ENCODE measurements at regions of chr10 and their contacts with region 1.

Region 1: GRCh38 chr10:29658984-29659965 is 24.5 kb upstream of the SVIL start:
- DNase-seq: peak; percentile 76
- ATAC-seq: peak; percentile 99
- H3K4me3 Mint-ChIP-seq: peak overlapping the region; percentile 32
- H3K27ac Mint-ChIP-seq: peak overlapping the region; percentile 6
- H3K4me1 Mint-ChIP-seq: peaks cover 40% of the 10 kb centered on the region
- H3K27me3 Mint-ChIP-seq: peaks cover 4% of the 10 kb centered on the region

Region 2: DNA sequence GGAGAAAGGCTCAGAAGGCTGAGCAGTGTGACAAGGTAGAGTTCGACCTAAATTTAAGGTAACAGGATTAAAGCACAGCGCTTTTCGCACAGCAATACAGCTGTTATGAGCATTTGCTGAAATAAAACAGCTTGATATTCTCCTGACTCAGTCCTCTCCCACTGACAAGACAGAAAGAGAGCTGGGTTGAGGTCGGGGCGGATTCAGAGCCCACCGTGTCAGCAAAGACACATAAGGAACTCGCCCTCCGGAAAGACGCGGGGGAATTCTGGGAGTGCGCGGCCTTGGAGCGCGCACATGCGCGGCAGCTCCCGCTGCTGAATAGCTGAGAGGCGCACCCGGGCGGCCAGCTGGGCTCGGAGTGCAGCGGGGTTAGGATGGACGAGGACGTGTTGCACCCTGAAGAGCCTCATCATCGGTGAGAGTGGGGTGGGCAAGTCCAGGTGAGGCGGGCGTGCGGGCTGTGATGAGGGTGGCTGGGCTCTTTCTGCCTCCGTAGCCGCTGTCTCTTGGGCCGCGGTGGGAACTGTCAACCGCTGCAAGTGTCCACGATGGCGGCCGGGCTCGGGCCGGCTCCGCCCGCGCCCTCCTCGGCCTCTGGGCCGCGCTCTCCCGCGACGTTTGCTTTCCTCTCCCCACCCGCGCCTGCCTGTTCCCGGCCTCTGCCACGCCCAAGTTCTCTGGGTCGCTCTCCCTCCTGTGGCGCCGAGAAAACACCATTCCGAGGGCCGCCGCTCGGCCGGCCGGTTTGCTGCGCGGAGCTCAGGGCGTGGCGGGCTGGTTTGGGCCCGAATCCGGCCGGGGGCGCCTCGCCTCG is 249.8 kb before region 1 on chr10:
- CTCF ChIA-PET with region 1: no interaction called
- POLR2A ChIA-PET with region 1: no interaction called
- intact Hi-C with region 1: loop called in 1 of 2 experiments (anchors 5 kb)
- DNase-seq: peak; percentile 64
- ATAC-seq: peak; percentile 63
- H3K4me3 Mint-ChIP-seq: peak overlapping the region; percentile 96
- H3K27ac Mint-ChIP-seq: peak overlapping the region; percentile 92
- H3K4me1 Mint-ChIP-seq: peaks cover 33% of the 10 kb centered on the region
- H3K27me3 Mint-ChIP-seq: no peaks in the 10 kb centered on the region

Region 3: DNA sequence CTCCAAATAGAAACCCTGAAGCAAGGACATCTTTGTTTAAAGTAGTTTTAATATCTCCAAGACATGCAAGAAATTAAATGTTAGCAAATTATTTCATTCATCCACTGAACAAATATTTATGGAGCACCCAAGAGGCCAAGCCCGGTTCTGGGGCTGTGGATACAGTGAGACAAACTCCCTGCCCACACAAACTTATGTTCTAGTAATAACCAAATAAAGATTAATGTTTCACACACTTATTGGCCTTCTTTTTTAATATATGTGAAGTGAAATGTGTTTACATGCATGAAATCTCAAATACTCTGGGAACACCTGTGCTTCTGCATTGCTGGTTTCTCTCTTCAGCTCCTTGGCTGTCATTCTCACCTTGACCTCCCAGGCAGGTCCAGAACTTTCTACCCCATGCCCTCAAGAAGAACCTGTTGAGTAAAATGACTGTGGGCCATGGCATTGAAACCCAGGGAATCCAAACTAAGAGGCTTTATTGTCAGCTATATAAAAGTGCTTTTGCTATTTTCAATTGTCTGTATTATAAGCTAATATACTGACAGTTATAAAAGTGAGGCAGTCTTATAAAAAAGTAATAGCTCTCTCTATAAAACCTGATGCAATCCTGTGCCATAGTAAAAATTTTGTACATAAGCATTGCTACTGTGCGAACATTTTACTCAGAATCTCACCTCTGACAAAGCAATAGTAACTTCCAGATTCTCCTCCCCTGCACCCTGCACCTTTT is 68.2 kb before region 1 on chr10:
- CTCF ChIA-PET with region 1: no interaction called
- POLR2A ChIA-PET with region 1: no interaction called
- intact Hi-C with region 1: loop called (anchors 1 kb)
- DNase-seq: no peak
- ATAC-seq: no peak
- H3K4me3 Mint-ChIP-seq: peak overlapping the region; percentile 44
- H3K27ac Mint-ChIP-seq: peak overlapping the region; percentile 86
- H3K4me1 Mint-ChIP-seq: peaks cover 18% of the 10 kb centered on the region
- H3K27me3 Mint-ChIP-seq: no peaks in the 10 kb centered on the region

Region 4: GRCh38 chr10:29635711-29636144 is 23.5 kb before region 1 on chr10:
- CTCF ChIA-PET with region 1: no interaction called
- POLR2A ChIA-PET with region 1: no interaction called
- intact Hi-C with region 1: loop called (anchors 1 kb)
- DNase-seq: peak; percentile 22
- ATAC-seq: no peak
- H3K4me3 Mint-ChIP-seq: no peak overlapping the region
- H3K27ac Mint-ChIP-seq: no peak overlapping the region
- H3K4me1 Mint-ChIP-seq: peaks cover 46% of the 10 kb centered on the region
- H3K27me3 Mint-ChIP-seq: no peaks in the 10 kb centered on the region

Region 5: DNA sequence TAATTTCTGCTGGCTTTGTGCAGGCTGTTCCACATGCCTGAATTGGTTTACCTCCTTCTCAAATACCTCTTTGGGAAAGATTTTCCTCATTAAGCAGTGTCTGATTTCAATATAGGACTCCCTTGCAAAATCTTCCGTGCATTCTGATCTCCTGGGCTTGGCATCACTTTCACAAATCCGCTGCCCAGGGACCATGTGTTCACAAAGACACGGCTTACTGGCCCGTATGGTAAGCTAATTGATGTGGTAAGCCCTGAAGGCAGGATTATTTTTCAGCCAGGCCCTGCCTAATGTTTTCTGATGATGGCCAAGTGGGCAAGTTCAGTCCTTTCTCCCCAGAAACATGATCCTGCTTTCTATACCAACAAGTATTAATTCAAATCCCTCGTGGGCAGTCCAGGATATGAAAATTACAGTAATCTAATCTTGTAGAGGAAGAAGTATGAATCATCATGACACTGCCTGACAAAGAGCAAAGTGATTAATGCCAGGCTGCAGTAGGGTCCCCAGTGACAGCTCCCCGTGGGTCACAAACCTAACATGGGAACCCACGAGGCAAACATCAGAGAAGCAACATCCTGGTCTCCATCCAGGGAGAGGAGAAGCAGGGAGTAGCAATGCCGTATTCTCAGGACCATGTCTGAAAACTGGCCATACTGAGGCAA is 12.9 kb before region 1 on chr10:
- CTCF ChIA-PET with region 1: interaction called, 9 read pairs
- POLR2A ChIA-PET with region 1: interaction called, 3 read pairs
- intact Hi-C with region 1: loop called (anchors 1 kb)
- DNase-seq: peak; percentile 41
- ATAC-seq: peak; percentile 87
- H3K4me3 Mint-ChIP-seq: no peak overlapping the region
- H3K27ac Mint-ChIP-seq: peak overlapping the region; percentile 9
- H3K4me1 Mint-ChIP-seq: peaks cover 46% of the 10 kb centered on the region
- H3K27me3 Mint-ChIP-seq: no peaks in the 10 kb centered on the region

Region 6: DNA sequence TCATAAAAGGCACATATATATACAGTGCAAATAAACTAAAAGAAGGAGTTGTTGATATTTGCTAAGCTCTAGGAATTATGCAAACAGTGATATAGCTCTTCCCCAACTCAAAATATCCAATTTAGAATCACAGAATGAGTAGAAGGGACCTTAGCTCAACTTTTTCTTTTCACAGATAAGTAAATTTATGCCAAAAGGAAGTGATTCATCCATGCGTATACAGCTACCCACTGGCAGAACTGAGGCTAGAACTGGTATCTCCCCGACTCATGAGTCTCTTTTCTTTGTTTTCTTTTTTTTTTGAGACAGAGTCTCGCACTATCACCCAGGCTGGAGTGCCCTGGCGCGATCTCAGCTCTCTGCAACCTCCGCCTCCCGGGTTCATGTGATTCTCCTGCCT is 29.7 kb after region 1 on chr10:
- CTCF ChIA-PET with region 1: interaction called, 6 read pairs
- POLR2A ChIA-PET with region 1: interaction called, 8 read pairs
- intact Hi-C with region 1: loop called (anchors 1 kb)
- DNase-seq: peak; percentile 50
- ATAC-seq: peak; percentile 98
- H3K4me3 Mint-ChIP-seq: no peak overlapping the region
- H3K27ac Mint-ChIP-seq: no peak overlapping the region
- H3K4me1 Mint-ChIP-seq: peaks cover 49% of the 10 kb centered on the region
- H3K27me3 Mint-ChIP-seq: no peaks in the 10 kb centered on the region

Region 7: GRCh38 chr10:29714096-29714874 is 55.0 kb after region 1 on chr10:
- CTCF ChIA-PET with region 1: no interaction called
- POLR2A ChIA-PET with region 1: no interaction called
- intact Hi-C with region 1: no loop called
- DNase-seq: peak; percentile 17
- ATAC-seq: peak; percentile 86
- H3K4me3 Mint-ChIP-seq: no peak overlapping the region
- H3K27ac Mint-ChIP-seq: peak overlapping the region; percentile 9
- H3K4me1 Mint-ChIP-seq: peaks cover 31% of the 10 kb centered on the region
- H3K27me3 Mint-ChIP-seq: no peaks in the 10 kb centered on the region

Region 8: GRCh38 chr10:29804025-29804852 is 145.0 kb after region 1 on chr10:
- CTCF ChIA-PET with region 1: no interaction called
- POLR2A ChIA-PET with region 1: no interaction called
- intact Hi-C with region 1: loop called in 1 of 2 experiments (anchors 1 kb)
- DNase-seq: peak; percentile 69
- ATAC-seq: peak; percentile 89
- H3K4me3 Mint-ChIP-seq: no peak overlapping the region
- H3K27ac Mint-ChIP-seq: peak overlapping the region; percentile 27
- H3K4me1 Mint-ChIP-seq: peaks cover 17% of the 10 kb centered on the region
- H3K27me3 Mint-ChIP-seq: peaks cover 11% of the 10 kb centered on the region